Activated B cell treated with CpG ODN at 0.5 μM for 24 hours (primary cell): ENCODE measurements at regions of chr13 and their contacts with region 1.

Region 1: DNA sequence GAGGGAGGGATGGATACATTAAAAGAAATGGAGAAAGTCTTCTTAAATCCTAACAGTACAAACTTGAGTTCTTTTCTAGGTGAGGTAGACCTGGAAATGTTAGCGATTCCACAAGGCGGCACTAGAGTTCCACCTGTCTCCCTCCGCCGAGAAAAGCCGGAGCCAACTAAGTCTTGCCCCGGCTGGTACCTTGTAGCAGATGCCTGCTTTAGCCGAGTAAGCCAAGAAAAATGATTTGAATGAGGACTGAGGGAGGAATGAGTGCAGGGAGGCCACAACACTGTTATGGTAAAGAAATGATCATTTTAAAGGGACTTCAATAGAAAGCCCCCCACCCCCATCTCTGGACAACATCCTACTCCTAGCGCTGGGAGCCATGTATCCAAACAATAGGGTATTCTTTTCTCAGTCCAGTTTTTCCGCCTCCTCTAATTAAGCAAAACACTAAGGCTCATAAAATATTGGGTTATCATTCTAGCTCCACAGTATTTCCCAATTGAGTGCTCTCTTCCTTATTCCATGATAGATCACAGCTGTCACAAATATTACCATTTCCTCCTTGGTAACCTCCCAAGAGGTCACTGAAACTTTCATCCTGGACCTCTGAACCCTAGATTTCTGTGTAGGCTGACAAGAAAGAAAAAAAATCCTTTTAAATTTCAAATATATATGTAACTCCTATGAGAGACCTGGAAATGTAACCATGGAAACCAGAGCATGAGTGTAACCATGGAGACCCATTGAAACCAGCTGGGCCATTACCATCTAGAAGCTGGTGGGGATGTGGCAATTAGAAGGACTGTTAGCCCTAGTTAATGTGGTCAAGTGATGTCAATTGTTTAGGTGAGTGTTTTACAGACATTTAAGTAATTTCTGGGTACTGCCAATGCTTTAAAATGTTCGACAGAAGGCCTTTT is 58.3 kb downstream of the GPALPP1 start:
- DNase-seq: peak; percentile 51
- ATAC-seq: peak; percentile 81
- H3K4me3 Mint-ChIP-seq: peak overlapping the region; percentile 71
- H3K27ac Mint-ChIP-seq: no peak overlapping the region
- H3K4me1 Mint-ChIP-seq: peaks cover 17% of the 10 kb centered on the region
- H3K27me3 Mint-ChIP-seq: peaks cover 13% of the 10 kb centered on the region
- CTCF ChIP-seq: peak; percentile 72

Region 2: GRCh38 chr13:44484562-44485138 is 563.0 kb before region 1 on chr13:
- CTCF ChIA-PET with region 1: no interaction called
- POLR2A ChIA-PET with region 1: no interaction called
- intact Hi-C with region 1: loop called (anchors 2 kb)
- DNase-seq: no peak
- ATAC-seq: peak; percentile 54
- H3K4me3 Mint-ChIP-seq: peak overlapping the region; percentile 58
- H3K27ac Mint-ChIP-seq: peak overlapping the region; percentile 30
- H3K4me1 Mint-ChIP-seq: peaks cover 21% of the 10 kb centered on the region
- H3K27me3 Mint-ChIP-seq: no peaks in the 10 kb centered on the region
- CTCF ChIP-seq: no peak

Region 3: DNA sequence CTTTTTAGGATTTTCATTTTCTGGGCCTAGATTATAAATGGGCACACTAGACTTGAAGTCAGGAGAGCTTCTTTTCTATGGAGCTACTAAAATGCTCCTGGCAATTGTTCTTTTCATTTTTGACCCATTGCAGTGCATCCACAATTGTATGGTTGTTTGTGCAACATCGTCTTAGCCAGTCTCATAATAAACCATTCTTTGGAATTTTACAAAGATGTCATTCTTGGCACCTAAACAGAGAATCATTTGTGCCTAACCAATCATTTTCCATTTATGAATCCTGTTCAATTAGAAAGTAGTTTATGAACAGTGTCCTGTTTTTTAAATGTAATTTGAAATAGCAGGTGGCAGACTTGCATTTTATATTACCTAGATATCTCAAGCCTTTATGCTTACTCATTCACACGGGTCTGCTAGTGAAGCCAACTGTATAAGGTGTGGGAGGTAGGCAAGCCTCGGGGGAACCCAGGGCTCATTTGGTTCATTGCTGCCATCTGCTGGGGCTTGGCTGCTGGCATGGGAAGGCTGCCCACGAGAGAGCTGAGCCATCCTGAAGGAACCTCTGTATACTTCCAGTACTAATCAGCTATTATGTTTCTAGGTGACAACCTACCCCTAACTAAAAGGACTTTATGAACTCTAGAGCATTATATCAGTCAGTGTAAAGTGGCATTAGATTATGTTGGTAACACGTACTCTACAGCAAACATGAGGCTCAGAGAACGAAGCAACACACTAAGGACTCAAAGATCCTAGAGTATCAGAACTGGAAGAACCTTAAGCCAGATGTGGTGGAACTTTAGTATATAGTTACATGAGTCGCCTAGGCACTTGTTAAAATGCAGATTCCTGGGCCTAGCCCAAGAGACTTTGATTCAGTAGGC is 233.3 kb after region 1 on chr13:
- CTCF ChIA-PET with region 1: interaction called, 75 read pairs
- POLR2A ChIA-PET with region 1: no interaction called
- intact Hi-C with region 1: loop called (anchors 1 kb)
- DNase-seq: peak; percentile 31
- ATAC-seq: peak; percentile 93
- H3K4me3 Mint-ChIP-seq: no peak overlapping the region
- H3K27ac Mint-ChIP-seq: no peak overlapping the region
- H3K4me1 Mint-ChIP-seq: peaks cover 14% of the 10 kb centered on the region
- H3K27me3 Mint-ChIP-seq: no peaks in the 10 kb centered on the region
- CTCF ChIP-seq: no peak

Region 4: GRCh38 chr13:45393941-45394570 is 346.4 kb after region 1 on chr13:
- CTCF ChIA-PET with region 1: interaction called, 25 read pairs
- POLR2A ChIA-PET with region 1: no interaction called
- intact Hi-C with region 1: loop called (anchors 1 kb)
- DNase-seq: no peak
- ATAC-seq: peak; percentile 74
- H3K4me3 Mint-ChIP-seq: no peak overlapping the region
- H3K27ac Mint-ChIP-seq: no peak overlapping the region
- H3K4me1 Mint-ChIP-seq: no peaks in the 10 kb centered on the region
- H3K27me3 Mint-ChIP-seq: no peaks in the 10 kb centered on the region
- CTCF ChIP-seq: no peak

Region 5: DNA sequence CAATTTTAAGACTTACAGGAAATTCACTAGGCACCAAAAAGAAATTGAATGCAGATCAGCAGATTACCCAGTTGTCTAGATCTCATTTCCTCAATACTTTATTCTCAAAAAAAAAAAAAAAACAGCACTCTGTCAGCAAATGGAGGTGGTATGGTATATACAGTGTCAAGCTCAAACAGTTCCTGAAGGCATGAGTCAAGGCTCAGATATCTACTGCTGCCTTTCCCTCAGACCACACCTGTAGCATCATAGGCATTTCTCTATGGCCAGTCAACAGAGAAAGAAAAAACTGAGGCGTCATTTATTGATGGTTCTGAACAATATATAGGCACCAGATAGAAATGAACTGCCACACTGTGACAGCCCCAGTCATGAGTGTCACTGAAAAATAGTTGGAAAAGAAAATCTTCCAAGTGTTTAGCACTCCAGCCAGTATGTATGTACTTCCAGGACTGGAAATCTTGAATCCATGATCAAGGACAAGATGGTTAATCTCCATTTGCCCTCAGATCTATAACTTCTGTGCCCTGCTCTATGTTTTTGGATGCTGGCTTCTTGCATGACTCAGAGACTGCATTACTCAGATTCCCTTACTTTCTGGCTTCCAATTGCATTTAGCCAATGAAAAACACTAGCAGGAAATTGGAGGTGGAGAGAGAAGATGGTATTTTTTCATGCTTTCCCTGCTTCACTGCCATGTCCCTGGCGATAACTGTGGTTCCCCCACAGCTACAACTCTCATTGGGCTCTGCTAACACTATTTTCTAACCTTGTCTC is 408.7 kb after region 1 on chr13:
- CTCF ChIA-PET with region 1: no interaction called
- POLR2A ChIA-PET with region 1: no interaction called
- intact Hi-C with region 1: no loop called
- DNase-seq: no peak
- ATAC-seq: no peak
- H3K4me3 Mint-ChIP-seq: no peak overlapping the region
- H3K27ac Mint-ChIP-seq: no peak overlapping the region
- H3K4me1 Mint-ChIP-seq: no peaks in the 10 kb centered on the region
- H3K27me3 Mint-ChIP-seq: peaks cover 8% of the 10 kb centered on the region
- CTCF ChIP-seq: no peak

Region 6: GRCh38 chr13:45511310-45512097 is 463.9 kb after region 1 on chr13:
- CTCF ChIA-PET with region 1: no interaction called
- POLR2A ChIA-PET with region 1: no interaction called
- intact Hi-C with region 1: loop called (anchors 1 kb)
- DNase-seq: no peak
- ATAC-seq: peak; percentile 58
- H3K4me3 Mint-ChIP-seq: no peak overlapping the region
- H3K27ac Mint-ChIP-seq: no peak overlapping the region
- H3K4me1 Mint-ChIP-seq: peaks cover 8% of the 10 kb centered on the region
- H3K27me3 Mint-ChIP-seq: no peaks in the 10 kb centered on the region
- CTCF ChIP-seq: peak; percentile 83